ENCODE measurements at regions of chr11 and their contacts with region 1.

Region 1: DNA sequence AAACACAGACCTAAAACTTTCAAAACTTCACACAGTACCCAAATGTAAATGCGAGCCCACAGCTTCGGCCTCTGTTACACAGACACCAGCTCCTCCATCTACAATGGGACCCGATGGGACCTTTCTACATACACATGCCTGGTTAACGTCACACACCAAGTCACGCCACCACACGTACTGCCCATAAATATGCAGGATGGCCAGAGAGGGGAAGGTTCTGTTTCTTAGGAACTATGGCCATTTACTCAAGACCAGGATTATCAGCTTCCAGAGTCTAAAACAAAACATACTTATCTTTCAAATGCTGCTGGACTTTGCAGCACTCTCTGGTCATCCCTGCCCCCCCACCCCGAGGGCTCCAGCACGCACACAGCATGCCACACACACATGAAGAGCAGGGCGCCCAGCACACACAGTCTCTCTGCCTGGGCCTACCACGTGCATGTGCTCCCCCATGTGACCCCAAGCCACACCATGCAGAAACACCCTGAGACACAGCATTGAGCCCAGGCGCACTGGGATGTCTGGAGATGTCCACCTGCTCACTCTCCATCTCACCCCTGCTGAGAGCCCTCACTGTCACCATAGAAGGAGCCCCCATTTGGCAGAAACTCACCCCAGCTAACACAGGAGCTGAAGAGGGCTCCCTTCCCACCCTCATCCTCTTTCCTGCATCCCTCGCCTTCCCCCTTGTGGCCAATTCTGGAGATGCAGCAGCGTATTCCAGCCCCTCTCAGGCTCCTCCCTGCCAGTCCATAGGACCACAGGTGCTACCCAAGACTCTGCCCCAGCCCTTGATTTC is 61.8 kb downstream of the SLC22A12 start:
- DNase-seq: peak; percentile 52 to 63 (median 57)
- H3K4me3 ChIP-seq: no peak overlapping the region
- H3K4me3 Mint-ChIP-seq: peak overlapping the region in 1 of 2 donors; percentile 11
- H3K27ac ChIP-seq: no peak overlapping the region
- H3K27ac Mint-ChIP-seq: peak overlapping the region in 3 of 7 donors; percentile 32 to 68 (median 61)
- H3K4me1 ChIP-seq: peaks cover 46 to 47% of the 10 kb centered on the region in 2 donors
- H3K4me1 Mint-ChIP-seq: peaks cover 52% of the 10 kb centered on the region
- H3K27me3 ChIP-seq: no peaks in the 10 kb centered on the region
- H3K27me3 Mint-ChIP-seq: peaks cover 0 to 3% (median 2%) of the 10 kb centered on the region in 3 donors
- CTCF ChIP-seq: peak; percentile 78

Region 2: DNA sequence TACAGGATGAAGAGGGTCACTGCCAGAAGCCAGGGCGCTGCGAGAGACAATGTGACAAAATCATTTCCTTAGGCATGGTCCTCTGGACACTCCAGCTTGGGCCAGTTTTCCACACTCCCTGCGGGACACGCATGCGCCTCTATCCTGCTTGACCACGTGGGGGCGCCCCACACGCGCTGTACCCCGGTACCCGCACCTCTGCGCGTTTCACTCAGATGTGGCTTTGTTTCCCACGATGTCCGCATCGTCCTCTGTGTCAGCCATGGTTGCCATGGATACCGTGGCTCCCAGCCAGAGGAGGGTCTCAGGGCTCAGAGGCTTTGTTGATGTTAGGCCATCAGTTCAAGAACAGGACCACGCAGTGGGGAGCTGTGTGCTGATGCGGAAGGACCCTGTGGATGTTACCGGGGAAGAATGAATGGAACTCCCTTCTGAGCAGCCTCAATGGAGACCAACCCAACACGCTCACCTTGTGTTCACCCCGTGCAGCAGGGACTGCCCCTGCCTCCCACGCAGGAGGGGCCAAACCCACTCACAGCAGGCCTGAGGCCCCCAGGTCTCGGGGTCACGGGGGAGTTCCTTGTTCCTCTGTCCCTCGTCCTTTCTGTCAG is 162.9 kb before region 1 on chr11:
- intact Hi-C with region 1: loop called in 1 of 2 experiments (anchors 5 kb)
- DNase-seq: peak; percentile 59 to 73 (median 69)
- H3K4me3 ChIP-seq: no peak overlapping the region
- H3K4me3 Mint-ChIP-seq: peak overlapping the region in 1 of 2 donors; percentile 24
- H3K27ac ChIP-seq: no peak overlapping the region
- H3K27ac Mint-ChIP-seq: peak overlapping the region in 1 of 7 donors; percentile 60
- H3K4me1 ChIP-seq: peaks cover 28 to 35% of the 10 kb centered on the region in 2 donors
- H3K4me1 Mint-ChIP-seq: peaks cover 24% of the 10 kb centered on the region
- H3K27me3 ChIP-seq: no peaks in the 10 kb centered on the region
- H3K27me3 Mint-ChIP-seq: peaks cover 0 to 5% (median under 1%) of the 10 kb centered on the region in 3 donors
- CTCF ChIP-seq: peak; percentile 94

Region 3: DNA sequence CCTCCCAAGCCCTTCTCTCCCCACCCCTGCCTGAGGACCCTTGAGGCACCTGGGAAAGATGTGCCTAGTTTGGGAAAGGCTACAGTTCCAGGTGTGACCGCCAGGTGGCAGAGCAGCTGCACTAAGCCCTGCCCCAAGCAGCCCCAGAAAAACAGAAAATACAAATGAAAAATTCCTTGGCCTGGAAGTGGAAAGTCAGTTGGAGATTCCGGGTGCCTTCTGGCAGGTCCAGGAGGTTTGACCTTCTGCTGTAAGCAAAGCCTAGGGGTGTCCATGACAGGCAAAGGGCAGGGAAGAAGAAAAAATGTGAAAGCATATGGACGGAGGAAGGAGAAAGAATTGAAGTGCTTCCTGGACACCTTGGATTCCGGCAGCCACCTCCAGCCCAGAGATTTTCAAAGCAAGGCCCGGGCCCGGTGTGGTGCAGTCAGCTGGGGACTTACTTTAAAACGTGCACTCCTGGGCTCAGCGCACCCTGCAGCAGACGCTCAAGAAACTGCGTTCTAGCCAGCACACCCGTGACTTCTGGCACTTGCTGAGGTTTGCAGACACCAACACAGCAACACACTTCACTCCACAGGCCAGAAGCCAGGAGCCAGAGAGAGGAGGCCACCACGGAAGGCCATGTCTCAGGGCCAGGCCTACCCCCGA is 99.1 kb before region 1 on chr11:
- intact Hi-C with region 1: loop called (anchors 5 kb)
- DNase-seq: peak; percentile 32 to 63 (median 55)
- H3K4me3 ChIP-seq: no peak overlapping the region
- H3K4me3 Mint-ChIP-seq: peak overlapping the region in 1 of 2 donors; percentile 35
- H3K27ac ChIP-seq: no peak overlapping the region
- H3K27ac Mint-ChIP-seq: peak overlapping the region in 1 of 7 donors; percentile 11
- H3K4me1 ChIP-seq: peaks cover 6 to 9% of the 10 kb centered on the region in 2 donors
- H3K4me1 Mint-ChIP-seq: peaks cover 14% of the 10 kb centered on the region
- H3K27me3 ChIP-seq: no peaks in the 10 kb centered on the region
- H3K27me3 Mint-ChIP-seq: peaks cover 2 to 10% (median 4%) of the 10 kb centered on the region in 3 donors
- CTCF ChIP-seq: peak; percentile 99

Region 4: DNA sequence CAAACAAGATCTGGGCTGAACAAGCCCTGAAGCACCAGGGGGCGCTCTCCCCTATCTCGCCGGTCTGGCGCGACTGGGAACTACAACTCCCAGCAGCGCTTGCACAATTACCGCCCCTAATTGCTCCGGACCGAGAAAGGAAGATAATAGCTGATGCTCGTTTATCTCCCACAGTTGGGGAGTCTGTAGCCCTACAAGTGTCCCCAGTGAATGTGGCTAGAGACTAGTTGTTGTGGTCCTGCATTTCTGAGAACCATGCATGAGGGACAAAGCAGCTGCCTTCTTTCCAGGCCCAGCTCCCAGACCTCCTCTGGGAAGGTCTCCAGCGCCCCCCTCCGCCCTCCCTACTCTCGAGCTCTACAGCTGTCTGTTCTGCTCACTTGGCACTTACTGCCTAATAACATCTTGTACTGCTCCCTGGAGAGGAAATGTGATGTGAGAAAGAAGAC is 35.8 kb after region 1 on chr11:
- intact Hi-C with region 1: loop called in 1 of 2 experiments (anchors 5 kb)
- DNase-seq: peak; percentile 80 to 88 (median 83)
- H3K4me3 ChIP-seq: peak overlapping the region; percentile 17 to 79 (median 45)
- H3K4me3 Mint-ChIP-seq: peak overlapping the region; percentile 74 to 89
- H3K27ac ChIP-seq: no peak overlapping the region
- H3K27ac Mint-ChIP-seq: peak overlapping the region in 6 of 7 donors; percentile 32 to 84 (median 58)
- H3K4me1 ChIP-seq: peaks cover 27 to 39% of the 10 kb centered on the region in 2 donors
- H3K4me1 Mint-ChIP-seq: peaks cover 41% of the 10 kb centered on the region
- H3K27me3 ChIP-seq: peaks cover 4 to 15% of the 10 kb centered on the region in 2 donors
- H3K27me3 Mint-ChIP-seq: peaks cover 17 to 23% (median 19%) of the 10 kb centered on the region in 3 donors
- CTCF ChIP-seq: peak; percentile 99

Region 5: DNA sequence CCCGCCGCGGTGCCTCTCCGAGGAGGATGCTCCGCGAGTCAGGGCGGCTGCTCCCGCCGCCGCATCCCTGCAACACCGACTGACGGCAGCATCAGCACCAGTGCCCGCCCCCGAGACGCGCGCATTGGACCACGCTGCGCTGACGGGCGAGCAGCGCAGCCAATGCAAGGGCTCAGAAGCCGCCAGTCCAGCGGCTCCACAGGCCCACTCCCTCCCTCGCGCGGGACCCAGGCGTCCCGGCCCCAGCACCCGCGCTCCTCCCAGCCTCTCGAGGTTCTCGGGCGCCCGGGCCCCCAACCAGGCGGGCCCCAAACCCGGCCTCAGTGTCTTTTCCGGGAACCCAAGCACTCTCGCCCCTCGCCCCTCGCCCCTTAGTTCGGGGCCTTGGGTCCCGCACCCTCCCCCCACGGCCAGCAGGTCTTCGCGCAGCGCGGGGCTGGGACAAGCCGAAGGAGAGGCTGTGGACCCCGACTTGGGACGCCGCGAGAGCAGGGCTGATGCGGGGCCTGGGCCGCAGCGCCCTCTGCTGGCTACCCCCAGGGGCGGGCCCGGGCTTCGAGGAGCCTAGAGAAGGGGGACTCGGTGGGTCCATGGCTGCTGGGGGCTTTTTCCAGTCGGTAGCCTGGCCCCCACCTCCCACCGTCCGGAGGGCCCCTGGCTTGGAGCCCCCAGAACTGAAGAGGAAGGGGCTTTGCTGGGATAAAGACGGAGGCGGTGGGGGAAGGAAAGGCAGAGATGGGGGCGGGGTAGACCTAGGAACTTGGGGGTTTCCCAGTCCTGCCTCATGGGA is 70.5 kb after region 1 on chr11 and contains the start of gene NRXN2:
- intact Hi-C with region 1: loop called in 1 of 2 experiments (anchors 5 kb)
- DNase-seq: peak; percentile 69 to 81 (median 79)
- H3K4me3 ChIP-seq: peak within 1 kb of the TSS; percentile 60 to 90 (median 61)
- H3K4me3 Mint-ChIP-seq: peak within 1 kb of the TSS; percentile 71 to 74
- H3K27ac ChIP-seq: peak within 1 kb of the TSS in 1 of 2 donors; percentile 65
- H3K27ac Mint-ChIP-seq: peak within 1 kb of the TSS in 2 of 7 donors; percentile 30 to 64
- H3K4me1 ChIP-seq: peaks cover 15 to 32% of the 10 kb centered on the region in 2 donors
- H3K4me1 Mint-ChIP-seq: peaks cover 24% of the 10 kb centered on the region
- H3K27me3 ChIP-seq: peaks cover 5 to 22% of the 10 kb centered on the region in 2 donors
- H3K27me3 Mint-ChIP-seq: peaks cover 20 to 32% (median 20%) of the 10 kb centered on the region in 3 donors
- CTCF ChIP-seq: peak; percentile 100
- polyA plus RNA-seq, gene NRXN2: 0.07 TPM in 1 of 3 donors, not detected in the others

Measured in CD14-positive monocyte (primary cell).